GM12878 (cell line): ENCODE measurements at regions of chr1 and their contacts with region 1.

Region 1: DNA sequence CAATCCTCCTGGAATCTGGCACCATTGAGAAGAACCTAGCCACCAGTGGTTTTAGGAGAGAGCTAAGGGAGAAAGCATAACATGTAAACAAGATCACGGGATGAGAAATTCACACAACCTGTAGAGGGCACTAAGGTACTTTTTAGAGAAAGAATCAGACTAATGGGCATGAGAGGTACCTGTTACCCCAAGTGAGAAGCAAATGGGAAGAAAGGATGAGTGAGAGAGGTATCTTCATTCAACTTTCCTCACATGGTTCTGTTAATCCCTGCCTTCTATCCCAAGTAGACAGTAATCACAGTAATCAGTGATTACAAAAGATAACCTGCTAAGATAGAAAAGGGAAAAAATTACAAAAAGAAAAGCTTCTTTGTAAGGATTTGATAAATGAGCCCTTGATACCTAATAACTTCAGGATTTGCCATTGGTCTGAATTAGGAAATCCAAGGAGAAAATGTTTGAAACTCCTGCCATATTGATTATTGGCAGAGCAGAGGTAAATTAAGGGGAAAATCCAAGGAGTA is 251.1 kb upstream of the ADGRL2 start:
- DNase-seq: peak; percentile 35
- ATAC-seq: peak; percentile 78
- H3K4me3 ChIP-seq: no peak overlapping the region
- H3K27ac ChIP-seq: peak overlapping the region; percentile 14
- H3K4me1 ChIP-seq: peaks cover 32% of the 10 kb centered on the region
- H3K27me3 ChIP-seq: no peaks in the 10 kb centered on the region
- CTCF ChIP-seq: peak; percentile 58 to 67 (median 63)
- EP300 ChIP-seq: peak in 1 of 2 experiments; percentile 41; a peak in 1 of 4 replicates
- POLR2A ChIP-seq: no peak
- RAD21 ChIP-seq: peak; percentile 78

Region 2: GRCh38 chr1:81414488-81415015 is 135.1 kb before region 1 on chr1:
- CTCF ChIA-PET with region 1: interaction called, 7 read pairs
- POLR2A ChIA-PET with region 1: no interaction called
- RAD21 ChIA-PET with region 1: interaction called, 3 read pairs
- SMC1A ChIA-PET with region 1: interaction called, 5 read pairs
- in situ Hi-C with region 1: no loop called
- intact Hi-C with region 1: loop called (anchors 2 kb)
- DNase-seq: peak; percentile 9
- ATAC-seq: peak; percentile 98
- H3K4me3 ChIP-seq: no peak overlapping the region
- H3K27ac ChIP-seq: no peak overlapping the region
- H3K4me1 ChIP-seq: no peaks in the 10 kb centered on the region
- H3K27me3 ChIP-seq: no peaks in the 10 kb centered on the region; a peak in 1 of 4 replicates
- CTCF ChIP-seq: peak; percentile 77 to 91 (median 85)
- EP300 ChIP-seq: no peak
- POLR2A ChIP-seq: no peak
- RAD21 ChIP-seq: peak; percentile 80

Region 3: GRCh38 chr1:81582467-81582986 is 32.9 kb after region 1 on chr1:
- CTCF ChIA-PET with region 1: interaction called, 63 read pairs
- POLR2A ChIA-PET with region 1: interaction called, 4 read pairs
- RAD21 ChIA-PET with region 1: interaction called, 25 read pairs
- SMC1A ChIA-PET with region 1: interaction called, 210 read pairs
- in situ Hi-C with region 1: no loop called
- intact Hi-C with region 1: no loop called
- DNase-seq: peak; percentile 21
- ATAC-seq: peak; percentile 88
- H3K4me3 ChIP-seq: no peak overlapping the region
- H3K27ac ChIP-seq: no peak overlapping the region
- H3K4me1 ChIP-seq: no peaks in the 10 kb centered on the region
- H3K27me3 ChIP-seq: peaks cover 0 to 3% of the 10 kb centered on the region in 2 experiments; a peak in 2 of 4 replicates
- CTCF ChIP-seq: no peak
- EP300 ChIP-seq: peak in 1 of 2 experiments; percentile 66; a peak in 3 of 4 replicates
- POLR2A ChIP-seq: no peak
- RAD21 ChIP-seq: no peak

Region 4: GRCh38 chr1:81670286-81670685 is 120.6 kb after region 1 on chr1:
- CTCF ChIA-PET with region 1: interaction called, 11 read pairs
- POLR2A ChIA-PET with region 1: no interaction called
- RAD21 ChIA-PET with region 1: interaction called, 7 read pairs
- SMC1A ChIA-PET with region 1: interaction called, 12 read pairs
- in situ Hi-C with region 1: no loop called
- intact Hi-C with region 1: no loop called
- DNase-seq: no peak
- ATAC-seq: no peak
- H3K4me3 ChIP-seq: no peak overlapping the region
- H3K27ac ChIP-seq: no peak overlapping the region
- H3K4me1 ChIP-seq: no peaks in the 10 kb centered on the region
- H3K27me3 ChIP-seq: 0 out of 4 replicates have a peak, but pooled peaks cover 0 to 2% of the 10 kb centered on the region in 2 experiments
- CTCF ChIP-seq: no peak
- EP300 ChIP-seq: no peak
- POLR2A ChIP-seq: no peak
- RAD21 ChIP-seq: no peak

Region 5: GRCh38 chr1:81738875-81739274 is 189.2 kb after region 1 on chr1:
- CTCF ChIA-PET with region 1: interaction called, 9 read pairs
- POLR2A ChIA-PET with region 1: no interaction called
- RAD21 ChIA-PET with region 1: interaction called, 8 read pairs
- SMC1A ChIA-PET with region 1: interaction called, 13 read pairs
- in situ Hi-C with region 1: no loop called
- intact Hi-C with region 1: no loop called
- DNase-seq: no peak
- ATAC-seq: peak; percentile 31
- H3K4me3 ChIP-seq: no peak overlapping the region
- H3K27ac ChIP-seq: no peak overlapping the region
- H3K4me1 ChIP-seq: no peaks in the 10 kb centered on the region
- H3K27me3 ChIP-seq: no peaks in the 10 kb centered on the region
- CTCF ChIP-seq: no peak
- EP300 ChIP-seq: no peak
- POLR2A ChIP-seq: no peak
- RAD21 ChIP-seq: no peak

Region 6: DNA sequence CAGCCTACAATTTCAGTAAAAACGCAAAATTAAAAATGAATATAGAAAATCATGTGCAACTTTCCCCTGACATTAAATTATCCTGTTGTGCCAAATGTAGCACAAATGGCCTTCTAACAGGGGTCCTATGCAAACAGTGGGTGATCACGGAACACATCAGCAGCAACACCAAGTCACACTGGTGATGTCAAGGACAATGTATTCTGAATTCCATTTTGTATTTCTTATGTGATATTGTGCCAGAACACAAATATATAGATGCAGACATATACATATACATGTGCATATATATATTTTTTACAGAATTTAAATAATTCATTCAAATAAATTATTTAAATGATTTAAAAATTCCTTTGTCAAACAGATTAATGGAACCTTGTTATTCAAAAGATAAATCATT is 242.5 kb after region 1 on chr1:
- CTCF ChIA-PET with region 1: interaction called, 10 read pairs
- POLR2A ChIA-PET with region 1: no interaction called
- RAD21 ChIA-PET with region 1: interaction called, 3 read pairs
- SMC1A ChIA-PET with region 1: interaction called, 6 read pairs
- in situ Hi-C with region 1: no loop called
- intact Hi-C with region 1: no loop called
- DNase-seq: no peak
- ATAC-seq: no peak
- H3K4me3 ChIP-seq: no peak overlapping the region
- H3K27ac ChIP-seq: no peak overlapping the region
- H3K4me1 ChIP-seq: no peaks in the 10 kb centered on the region
- H3K27me3 ChIP-seq: no peaks in the 10 kb centered on the region
- CTCF ChIP-seq: no peak
- EP300 ChIP-seq: no peak
- POLR2A ChIP-seq: no peak
- RAD21 ChIP-seq: no peak